ENCODE measurements at regions of chr12 and their contacts with region 1.

Region 1: GRCh38 chr12:5083955-5084849 is 40.5 kb downstream of the KCNA5 start:
- DNase-seq: no peak
- H3K4me3 ChIP-seq: no peak overlapping the region
- H3K27ac ChIP-seq: no peak overlapping the region
- H3K4me1 ChIP-seq: no peaks in the 10 kb centered on the region
- H3K27me3 ChIP-seq: no peaks in the 10 kb centered on the region
- CTCF ChIP-seq: peak; percentile 45 to 60 (median 55)
- EP300 ChIP-seq: no peak
- POLR2A ChIP-seq: no peak

Region 2: DNA sequence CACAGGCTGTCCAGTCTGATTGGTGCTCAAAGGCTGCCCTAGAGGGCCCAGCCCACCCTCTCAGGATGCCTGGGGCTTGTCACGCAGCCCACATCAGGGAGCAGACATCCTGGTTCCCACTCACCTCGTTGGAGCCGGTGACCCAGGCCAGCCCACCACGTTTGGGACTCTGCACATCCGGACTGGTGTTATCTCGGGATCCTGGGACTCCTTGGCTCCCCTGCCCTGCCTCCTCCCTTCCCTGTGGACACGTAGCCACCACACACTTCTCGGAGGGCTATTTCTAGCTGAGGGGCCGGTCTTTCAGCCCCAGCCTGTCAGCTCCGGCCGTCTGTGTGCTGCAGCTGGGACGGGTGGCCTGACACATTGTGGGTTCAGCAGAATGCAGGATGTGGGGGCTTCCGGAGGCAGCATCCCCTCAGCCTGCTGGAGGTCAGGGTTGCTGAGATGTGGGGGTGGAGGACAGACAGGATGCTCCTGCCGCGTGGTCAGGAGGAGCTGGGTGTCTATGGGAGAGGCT is 691.9 kb before region 1 on chr12:
- intact Hi-C with region 1: no loop called
- DNase-seq: no peak
- H3K4me3 ChIP-seq: no peak overlapping the region
- H3K27ac ChIP-seq: no peak overlapping the region
- H3K4me1 ChIP-seq: no peaks in the 10 kb centered on the region
- H3K27me3 ChIP-seq: no peaks in the 10 kb centered on the region
- CTCF ChIP-seq: no peak
- EP300 ChIP-seq: no peak
- POLR2A ChIP-seq: no peak

Region 3: DNA sequence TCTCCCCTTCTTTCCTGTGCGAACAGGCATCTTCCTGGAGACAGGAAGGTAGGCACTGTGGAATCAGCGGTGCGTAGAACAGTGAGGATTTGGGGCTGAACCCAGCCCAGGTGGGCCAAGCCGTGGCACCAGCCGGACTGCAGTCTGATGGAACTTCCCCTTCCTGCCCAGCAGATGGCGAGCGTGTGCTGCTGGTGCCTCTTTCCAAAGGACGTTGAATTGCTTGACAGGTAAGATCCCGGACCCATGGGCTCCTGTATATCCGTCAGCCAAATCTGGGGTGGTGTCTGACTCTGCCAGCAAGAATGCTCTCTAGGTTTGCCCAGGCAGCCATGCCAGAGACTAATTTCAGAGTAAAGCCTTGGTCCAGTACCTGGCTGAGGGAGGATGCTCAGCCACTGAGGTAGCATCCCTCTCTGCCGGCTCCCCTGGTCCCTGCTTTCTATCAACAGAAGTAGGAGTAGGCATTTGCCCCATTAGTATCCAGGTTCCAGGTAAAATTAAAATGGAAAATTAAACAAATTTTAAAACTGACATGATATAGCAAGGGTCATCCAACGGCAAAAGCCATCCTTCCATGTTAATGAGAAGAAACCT is 61.6 kb before region 1 on chr12:
- intact Hi-C with region 1: loop called (anchors 1 kb)
- DNase-seq: no peak
- H3K4me3 ChIP-seq: no peak overlapping the region
- H3K27ac ChIP-seq: no peak overlapping the region
- H3K4me1 ChIP-seq: no peaks in the 10 kb centered on the region
- H3K27me3 ChIP-seq: no peaks in the 10 kb centered on the region
- CTCF ChIP-seq: peak; percentile 72 to 91 (median 84)
- EP300 ChIP-seq: no peak
- POLR2A ChIP-seq: no peak

Region 4: GRCh38 chr12:5123921-5124320 is 39.7 kb after region 1 on chr12:
- intact Hi-C with region 1: no loop called
- DNase-seq: no peak
- H3K4me3 ChIP-seq: no peak overlapping the region
- H3K27ac ChIP-seq: no peak overlapping the region
- H3K4me1 ChIP-seq: no peaks in the 10 kb centered on the region
- H3K27me3 ChIP-seq: no peaks in the 10 kb centered on the region
- CTCF ChIP-seq: no peak
- EP300 ChIP-seq: no peak
- POLR2A ChIP-seq: no peak